ENCODE measurements at regions of chr1 and their contacts with region 1.

Region 1: DNA sequence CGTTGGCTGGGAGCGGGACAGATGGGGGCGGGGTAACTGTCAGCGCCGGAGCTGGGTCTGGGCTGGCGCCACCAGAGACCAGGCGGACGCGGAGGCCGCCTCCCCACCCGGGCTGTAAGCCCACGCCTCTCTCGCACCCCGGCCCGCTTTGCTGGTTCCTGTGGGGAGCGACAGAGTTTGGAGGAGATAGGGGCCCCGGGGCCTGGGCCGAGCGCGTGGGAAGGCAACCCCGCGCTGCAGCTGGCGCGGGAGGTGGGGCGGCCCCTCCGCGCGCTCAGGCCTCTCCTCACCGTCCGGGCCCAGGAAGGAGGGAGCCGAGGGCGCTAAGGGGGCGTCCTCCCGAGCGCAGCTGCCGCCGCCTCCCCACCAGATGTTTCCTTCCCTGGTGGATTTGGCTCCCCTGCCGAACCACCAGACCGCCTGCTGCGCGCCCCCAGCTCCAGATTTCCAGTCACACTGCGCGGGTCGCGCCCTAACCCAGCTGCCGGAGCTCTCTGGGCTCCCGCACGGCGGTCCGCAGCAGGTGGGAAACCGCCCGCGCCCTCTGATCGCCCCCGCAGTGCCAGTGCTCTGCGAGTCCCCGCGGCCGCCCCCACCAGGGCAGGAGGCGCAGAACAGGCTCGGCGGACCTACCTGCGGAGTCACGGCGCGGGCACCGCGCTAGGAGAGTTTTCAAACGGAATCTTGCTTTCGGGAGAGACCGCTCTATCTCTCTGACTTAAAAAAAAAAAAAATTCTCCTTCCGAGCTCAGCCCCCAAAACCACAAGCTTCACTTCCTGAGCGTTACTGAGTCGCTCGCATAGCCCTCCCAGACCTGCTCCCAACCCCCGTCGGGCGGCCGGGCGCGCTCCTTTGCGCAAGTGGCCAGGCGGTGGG is 1.1 kb downstream of the GFI1 start:
- H3K4me3 ChIP-seq: peak overlapping the region; percentile 69
- H3K27ac ChIP-seq: peak overlapping the region; percentile 69; the same call in 1 of the 2 replicates
- H3K4me1 ChIP-seq: no peaks in the 10 kb centered on the region; the same call in none of the 2 replicates
- CTCF ChIP-seq: peak; percentile 85

Region 2: GRCh38 chr1:92154934-92155333 is 330.7 kb before region 1 on chr1:
- CTCF ChIA-PET with region 1: no interaction called
- POLR2A ChIA-PET with region 1: interaction called, 10 read pairs
- H3K4me3 ChIP-seq: no peak overlapping the region
- H3K27ac ChIP-seq: no peak overlapping the region
- H3K4me1 ChIP-seq: no peaks in the 10 kb centered on the region
- CTCF ChIP-seq: no peak

Region 3: GRCh38 chr1:92310185-92310597 is 175.4 kb before region 1 on chr1:
- CTCF ChIA-PET with region 1: interaction called, 10 read pairs
- POLR2A ChIA-PET with region 1: interaction called, 3 read pairs
- H3K4me3 ChIP-seq: no peak overlapping the region
- H3K27ac ChIP-seq: no peak overlapping the region
- H3K4me1 ChIP-seq: no peaks in the 10 kb centered on the region
- CTCF ChIP-seq: no peak

Region 4: DNA sequence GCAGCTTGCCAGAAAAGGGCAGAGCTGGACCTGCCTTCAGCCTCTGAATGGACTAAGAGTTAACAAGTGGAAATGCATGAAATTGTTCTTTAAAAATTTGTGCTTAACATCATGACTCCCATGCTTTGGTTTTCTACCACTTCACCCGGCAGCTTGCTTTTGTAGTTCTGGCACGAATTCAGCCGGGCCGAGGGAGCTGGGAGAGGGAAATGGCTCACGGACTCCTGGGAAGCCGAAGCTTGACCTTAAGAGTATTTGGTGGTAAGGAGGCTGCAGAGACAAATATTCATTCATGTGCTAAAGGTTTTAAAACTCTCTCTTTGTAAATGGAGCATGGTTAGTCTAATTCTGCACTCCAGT is 18.3 kb after region 1 on chr1:
- CTCF ChIA-PET with region 1: no interaction called
- POLR2A ChIA-PET with region 1: no interaction called
- H3K4me3 ChIP-seq: no peak overlapping the region
- H3K27ac ChIP-seq: no peak overlapping the region
- H3K4me1 ChIP-seq: no peaks in the 10 kb centered on the region
- CTCF ChIP-seq: no peak

Measured in HEK293 (cell line).